AG04449 (cell line): ENCODE measurements at regions of chr12 and their contacts with region 1.

Region 1: GRCh38 chr12:65986047-65986446 is 144.5 kb downstream of the LLPH start:
- DNase-seq: no peak
- H3K4me3 ChIP-seq: no peak overlapping the region
- CTCF ChIP-seq: no peak

Region 2: GRCh38 chr12:65972149-65972548 is 13.9 kb before region 1 on chr12:
- CTCF ChIA-PET with region 1: interaction called, 12 read pairs
- POLR2A ChIA-PET with region 1: no interaction called
- DNase-seq: no peak
- H3K4me3 ChIP-seq: no peak overlapping the region
- CTCF ChIP-seq: no peak

Region 3: GRCh38 chr12:65997056-65997455 is 11.0 kb after region 1 on chr12:
- CTCF ChIA-PET with region 1: interaction called, 11 read pairs
- POLR2A ChIA-PET with region 1: no interaction called
- DNase-seq: no peak
- H3K4me3 ChIP-seq: no peak overlapping the region
- CTCF ChIP-seq: no peak